ENCODE measurements at regions of chr2 and their contacts with region 1.

Region 1: GRCh38 chr2:174248187-174248997 is at the start of gene OLA1:
- DNase-seq: peak; percentile 99
- ATAC-seq: peak; percentile 97
- H3K4me3 Mint-ChIP-seq: peak within 1 kb of the TSS; percentile 88
- H3K27ac Mint-ChIP-seq: peak within 1 kb of the TSS; percentile 86
- H3K4me1 Mint-ChIP-seq: peaks cover 27% of the 10 kb centered on the region
- H3K27me3 Mint-ChIP-seq: no peaks in the 10 kb centered on the region
- CTCF ChIP-seq: no peak
- total RNA-seq, gene OLA1: 74.4 and 86.6 TPM in 2 replicates

Region 2: GRCh38 chr2:173075781-173076580 is 1172.4 kb before region 1 on chr2 and contains the start of gene MAP3K20:
- CTCF ChIA-PET with region 1: no interaction called
- POLR2A ChIA-PET with region 1: no interaction called
- intact Hi-C with region 1: loop called (anchors 2 kb)
- DNase-seq: peak; percentile 42
- ATAC-seq: peak; percentile 68
- H3K4me3 Mint-ChIP-seq: peak within 1 kb of the TSS; percentile 89
- H3K27ac Mint-ChIP-seq: peak within 1 kb of the TSS; percentile 80
- H3K4me1 Mint-ChIP-seq: peaks cover 13% of the 10 kb centered on the region
- H3K27me3 Mint-ChIP-seq: peaks cover 4% of the 10 kb centered on the region
- CTCF ChIP-seq: no peak
- total RNA-seq, gene MAP3K20: 8.7 and 9.5 TPM in 2 replicates

Region 3: GRCh38 chr2:173874894-173875237 is 373.5 kb before region 1 on chr2:
- CTCF ChIA-PET with region 1: no interaction called
- POLR2A ChIA-PET with region 1: no interaction called
- intact Hi-C with region 1: loop called (anchors 2 kb)
- DNase-seq: peak; percentile 39
- ATAC-seq: peak; percentile 98
- H3K4me3 Mint-ChIP-seq: peak overlapping the region; percentile 52
- H3K27ac Mint-ChIP-seq: peak overlapping the region; percentile 59
- H3K4me1 Mint-ChIP-seq: peaks cover 34% of the 10 kb centered on the region
- H3K27me3 Mint-ChIP-seq: peaks cover 19% of the 10 kb centered on the region
- CTCF ChIP-seq: no peak

Region 4: GRCh38 chr2:174326161-174327020 is 78.0 kb after region 1 on chr2:
- CTCF ChIA-PET with region 1: no interaction called
- POLR2A ChIA-PET with region 1: interaction called, 3 read pairs
- intact Hi-C with region 1: loop called (anchors 5 kb)
- DNase-seq: no peak
- ATAC-seq: peak; percentile 50
- H3K4me3 Mint-ChIP-seq: peak overlapping the region; percentile 85
- H3K27ac Mint-ChIP-seq: peak overlapping the region; percentile 18
- H3K4me1 Mint-ChIP-seq: peaks cover 27% of the 10 kb centered on the region
- H3K27me3 Mint-ChIP-seq: peaks cover 55% of the 10 kb centered on the region
- CTCF ChIP-seq: no peak

Region 5: GRCh38 chr2:174487108-174487819 is 238.9 kb after region 1 on chr2:
- CTCF ChIA-PET with region 1: no interaction called
- POLR2A ChIA-PET with region 1: no interaction called
- intact Hi-C with region 1: loop called (anchors 5 kb)
- DNase-seq: peak; percentile 86
- ATAC-seq: peak; percentile 97
- H3K4me3 Mint-ChIP-seq: peak overlapping the region; percentile 96
- H3K27ac Mint-ChIP-seq: peak overlapping the region; percentile 93
- H3K4me1 Mint-ChIP-seq: peaks cover 41% of the 10 kb centered on the region
- H3K27me3 Mint-ChIP-seq: no peaks in the 10 kb centered on the region
- CTCF ChIP-seq: no peak

Region 6: DNA sequence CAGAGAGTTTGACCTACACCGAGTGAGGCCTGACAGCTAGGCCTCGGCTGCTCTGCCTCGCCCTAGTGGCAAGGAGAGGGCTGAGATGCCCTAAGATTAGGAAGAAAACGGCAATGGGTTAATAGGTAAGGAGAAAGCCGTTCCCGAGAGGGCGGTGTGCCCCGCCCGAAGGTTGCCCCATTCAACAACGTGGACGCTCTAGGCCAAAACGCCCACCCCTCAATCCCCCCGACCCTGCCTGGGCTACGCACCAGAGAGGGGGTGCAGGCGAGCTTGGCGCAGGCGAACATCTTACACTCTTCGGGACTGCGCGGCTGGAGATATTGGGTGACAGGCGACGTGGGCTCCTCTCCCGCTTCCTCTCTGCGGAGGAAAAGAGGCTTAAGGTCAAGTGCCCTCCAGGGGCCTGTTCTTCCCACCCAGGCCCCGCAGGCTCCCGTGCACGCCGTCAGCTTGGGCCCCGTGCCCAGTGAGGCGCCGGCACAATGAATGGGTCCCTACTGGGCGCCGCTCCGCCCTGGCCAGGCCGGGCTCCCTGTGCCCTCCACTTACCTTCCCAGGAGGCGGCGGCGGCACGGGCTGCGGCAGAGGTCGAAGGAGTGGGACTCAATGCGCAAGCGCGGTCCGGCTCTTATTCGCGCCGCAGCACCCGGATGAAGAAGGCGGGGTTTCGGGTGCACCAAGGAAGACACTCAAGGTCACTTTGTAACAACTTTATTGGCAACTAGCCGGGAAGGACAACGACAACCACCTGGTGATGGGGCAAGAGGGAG is 932.9 kb after region 1 on chr2 and contains the start of gene ATP5MC3:
- CTCF ChIA-PET with region 1: no interaction called
- POLR2A ChIA-PET with region 1: no interaction called
- intact Hi-C with region 1: loop called (anchors 5 kb)
- DNase-seq: peak; percentile 87
- ATAC-seq: peak; percentile 89
- H3K4me3 Mint-ChIP-seq: peak within 1 kb of the TSS; percentile 94
- H3K27ac Mint-ChIP-seq: peak within 1 kb of the TSS; percentile 83
- H3K4me1 Mint-ChIP-seq: peaks cover 21% of the 10 kb centered on the region
- H3K27me3 Mint-ChIP-seq: no peaks in the 10 kb centered on the region
- CTCF ChIP-seq: no peak
- total RNA-seq, gene ATP5MC3: 147 and 163 TPM in 2 replicates

Measured in activated B cell treated with CpG ODN at 0.5 μM for 24 hours (primary cell).